RWPE1 (cell line): ENCODE measurements at regions of chr1 and their contacts with region 1.

Region 1: GRCh38 chr1:78145105-78145580 is 99.4 kb downstream of the GIPC2 start:
- DNase-seq: peak; percentile 62
- H3K27ac ChIP-seq: no peak overlapping the region
- CTCF ChIP-seq: peak; percentile 88

Region 2: DNA sequence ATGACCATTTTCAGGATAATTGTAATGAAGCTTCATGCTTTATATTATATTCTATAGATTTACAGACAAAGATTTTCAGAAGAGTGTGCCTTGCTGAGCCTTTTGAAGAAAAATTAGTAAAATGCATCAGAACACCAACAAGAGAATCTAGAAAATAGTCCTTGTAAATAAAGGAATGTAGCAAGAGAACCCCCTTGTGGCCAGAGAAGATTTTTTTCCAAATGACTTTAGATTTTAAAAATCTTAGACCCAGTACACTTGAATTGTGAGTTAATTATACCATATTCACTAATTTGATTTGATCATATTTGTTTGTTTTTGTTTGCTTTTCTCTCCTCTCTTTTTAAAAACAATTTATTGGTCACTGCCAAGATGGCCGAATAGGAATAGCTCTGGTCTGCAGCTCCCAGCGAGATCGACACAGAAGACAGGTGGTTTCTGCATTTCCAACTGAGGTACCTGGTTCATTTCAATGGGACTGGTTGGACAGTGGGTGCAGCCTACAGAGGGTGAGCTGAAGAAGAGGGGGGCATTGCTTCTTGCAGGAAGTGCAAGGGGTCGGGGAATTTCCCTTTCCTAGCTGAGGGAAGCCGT is 462.3 kb after region 1 on chr1:
- CTCF ChIA-PET with region 1: interaction called, 17 read pairs
- POLR2A ChIA-PET with region 1: no interaction called
- DNase-seq: peak; percentile 51
- H3K27ac ChIP-seq: no peak overlapping the region
- CTCF ChIP-seq: peak; percentile 79; the same call in 1 of the 2 replicates